Ascending aorta (tissue), 2 donors: ENCODE measurements at regions of chr3 and their contacts with region 1.

Region 1: DNA sequence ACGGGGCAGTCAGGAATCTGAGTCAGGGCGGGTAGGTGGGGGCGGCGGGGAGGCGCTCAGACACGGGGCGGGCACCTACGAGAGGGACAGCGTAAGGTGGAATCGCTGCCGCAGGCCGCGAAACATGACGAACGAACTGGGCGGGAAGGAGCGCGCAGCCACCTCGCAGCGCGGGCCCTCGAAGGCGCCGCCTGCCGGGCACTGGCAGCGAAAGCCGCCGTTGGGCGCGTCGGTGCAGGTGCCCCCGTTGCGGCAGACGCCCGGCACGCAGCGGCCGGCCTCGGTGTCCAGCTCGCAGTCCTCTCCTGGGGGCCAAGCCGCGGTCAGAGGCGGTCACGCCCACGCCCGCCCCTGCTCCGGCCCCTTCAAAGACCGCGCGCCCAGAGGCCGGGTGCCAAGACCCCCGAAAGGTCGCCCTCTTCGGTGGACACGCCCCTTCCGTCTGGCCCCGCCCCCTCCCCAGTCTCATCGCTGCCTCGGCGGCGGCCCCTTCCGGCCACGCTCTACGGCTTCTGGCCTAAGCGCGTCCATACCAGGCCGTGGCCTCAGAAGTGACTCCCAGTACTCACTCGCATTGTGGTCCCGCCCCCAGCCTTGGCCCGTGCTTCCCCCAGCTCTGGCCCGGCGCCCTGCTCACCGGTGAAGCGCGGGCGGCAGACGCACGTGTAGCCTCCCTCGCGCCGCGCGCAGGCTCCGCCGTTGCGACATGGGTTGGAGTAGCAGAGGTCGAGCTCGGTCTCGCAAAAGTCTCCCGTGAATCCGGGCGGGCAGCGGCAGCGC is 6.4 kb downstream of the CELSR3 start:
- DNase-seq: peak; percentile 62 to 89
- H3K4me3 ChIP-seq: peak overlapping the region; percentile 70 to 77
- H3K27ac ChIP-seq: peak overlapping the region; percentile 68 to 89
- H3K4me1 ChIP-seq: peaks cover 8 to 19% of the 10 kb centered on the region in 2 donors
- H3K27me3 ChIP-seq: no peaks in the 10 kb centered on the region
- CTCF ChIP-seq: peak; percentile 50 to 83 (median 69)

Region 2: DNA sequence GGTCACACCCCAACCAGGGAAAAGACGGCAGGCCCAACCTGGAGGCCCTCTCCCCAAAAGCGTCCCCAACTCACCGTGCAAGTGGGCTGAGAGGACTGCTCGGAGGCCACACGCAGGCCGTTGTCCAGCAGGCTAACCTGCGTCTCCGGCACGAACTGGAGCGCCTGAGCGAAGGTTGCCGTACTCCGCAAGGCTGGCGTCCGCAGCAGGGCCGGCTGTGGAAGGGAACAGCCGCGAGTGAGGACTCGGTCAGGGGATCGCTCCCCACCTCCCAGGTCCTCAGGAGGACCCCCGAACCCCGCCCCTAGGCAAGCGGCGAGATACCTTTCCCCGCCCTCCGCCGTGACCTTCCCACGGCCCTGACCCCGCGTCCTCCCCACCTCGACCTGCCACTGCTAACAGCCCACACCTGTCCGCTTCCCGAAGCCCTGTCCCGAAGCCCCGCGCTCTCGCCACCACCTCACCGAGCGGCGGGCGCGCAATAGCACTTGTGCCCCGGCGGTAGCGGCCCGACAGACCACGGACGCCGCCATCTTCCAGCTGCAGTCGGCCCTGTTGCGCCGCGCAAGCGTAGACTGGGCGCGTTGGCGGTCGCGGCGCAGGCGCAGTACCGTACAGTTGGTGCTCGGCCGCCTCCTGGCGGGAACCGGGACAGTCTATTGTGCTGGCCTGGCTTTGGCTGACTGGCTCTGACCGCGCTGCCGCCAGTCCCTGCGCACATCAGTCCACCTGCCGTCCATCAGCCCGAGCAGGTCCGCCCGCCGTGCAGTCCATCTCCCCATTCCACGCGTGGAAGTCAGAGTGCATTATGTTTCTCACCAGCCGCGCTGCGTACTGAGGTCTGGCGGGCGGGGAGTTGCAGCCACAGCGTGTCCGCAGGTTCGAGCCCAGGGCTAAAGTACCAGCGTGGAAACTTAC is 46.9 kb before region 1 on chr3 and contains the start of gene UQCRC1:
- intact Hi-C with region 1: loop called (anchors 2 kb)
- DNase-seq: peak; percentile 67 to 96
- H3K4me3 ChIP-seq: peak within 1 kb of the TSS; percentile 65 to 92
- H3K27ac ChIP-seq: peak within 1 kb of the TSS; percentile 80 to 84
- H3K4me1 ChIP-seq: peaks cover 5 to 15% of the 10 kb centered on the region in 2 donors
- H3K27me3 ChIP-seq: no peaks in the 10 kb centered on the region
- CTCF ChIP-seq: peak; percentile 81 to 95 (median 86)
- total RNA-seq, gene UQCRC1: 193 TPM